HEK293 (cell line): ENCODE measurements at regions of chr19 and their contacts with region 1.

Region 1: GRCh38 chr19:10644260-10645007 is 9.7 kb upstream of the ILF3 start:
- H3K4me3 ChIP-seq: no peak overlapping the region
- H3K27ac ChIP-seq: no peak overlapping the region
- H3K4me1 ChIP-seq: no peaks in the 10 kb centered on the region
- CTCF ChIP-seq: peak; percentile 95

Region 2: DNA sequence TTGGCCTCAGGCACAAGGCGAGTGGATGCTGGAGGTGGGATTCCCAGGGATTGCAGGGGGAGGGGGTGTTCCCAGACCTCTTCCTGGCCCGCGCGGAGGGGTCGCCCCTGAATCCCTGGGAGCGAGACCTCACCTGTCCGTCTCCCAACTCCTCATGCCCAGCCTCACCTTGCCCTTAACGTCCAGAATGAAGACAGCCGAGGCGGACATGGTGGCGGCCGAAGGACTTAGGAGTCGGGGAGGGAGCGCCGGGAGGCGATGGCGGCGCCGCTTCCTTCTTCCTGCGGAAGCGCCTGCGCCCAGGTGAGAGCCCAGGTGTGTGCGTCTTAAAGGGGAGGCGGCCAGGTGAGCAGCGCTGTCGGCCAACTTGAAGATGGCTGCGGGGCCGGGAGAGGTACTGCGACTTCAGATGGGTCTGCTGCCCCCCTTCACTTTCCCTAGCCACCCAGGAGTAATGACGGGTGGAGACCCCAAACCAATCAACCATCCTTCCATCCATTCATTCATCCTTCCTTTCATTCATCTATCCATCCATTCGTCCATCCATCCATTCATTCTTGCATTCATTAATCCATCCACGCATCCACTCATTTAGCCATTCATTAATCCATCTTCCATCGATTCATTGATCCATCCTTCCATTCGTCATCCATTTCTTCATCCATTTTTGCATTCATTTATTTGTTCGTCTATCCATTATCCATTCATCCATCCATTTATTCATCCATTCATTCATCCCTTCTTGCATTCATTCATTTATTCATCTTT is 57.2 kb before region 1 on chr19 and contains the start of gene AP1M2:
- CTCF ChIA-PET with region 1: interaction called, 243 read pairs
- POLR2A ChIA-PET with region 1: interaction called, 3 read pairs
- H3K4me3 ChIP-seq: peak within 1 kb of the TSS; percentile 34
- H3K27ac ChIP-seq: no peak within 1 kb of the TSS
- H3K4me1 ChIP-seq: no peaks in the 10 kb centered on the region
- CTCF ChIP-seq: no peak

Region 3: DNA sequence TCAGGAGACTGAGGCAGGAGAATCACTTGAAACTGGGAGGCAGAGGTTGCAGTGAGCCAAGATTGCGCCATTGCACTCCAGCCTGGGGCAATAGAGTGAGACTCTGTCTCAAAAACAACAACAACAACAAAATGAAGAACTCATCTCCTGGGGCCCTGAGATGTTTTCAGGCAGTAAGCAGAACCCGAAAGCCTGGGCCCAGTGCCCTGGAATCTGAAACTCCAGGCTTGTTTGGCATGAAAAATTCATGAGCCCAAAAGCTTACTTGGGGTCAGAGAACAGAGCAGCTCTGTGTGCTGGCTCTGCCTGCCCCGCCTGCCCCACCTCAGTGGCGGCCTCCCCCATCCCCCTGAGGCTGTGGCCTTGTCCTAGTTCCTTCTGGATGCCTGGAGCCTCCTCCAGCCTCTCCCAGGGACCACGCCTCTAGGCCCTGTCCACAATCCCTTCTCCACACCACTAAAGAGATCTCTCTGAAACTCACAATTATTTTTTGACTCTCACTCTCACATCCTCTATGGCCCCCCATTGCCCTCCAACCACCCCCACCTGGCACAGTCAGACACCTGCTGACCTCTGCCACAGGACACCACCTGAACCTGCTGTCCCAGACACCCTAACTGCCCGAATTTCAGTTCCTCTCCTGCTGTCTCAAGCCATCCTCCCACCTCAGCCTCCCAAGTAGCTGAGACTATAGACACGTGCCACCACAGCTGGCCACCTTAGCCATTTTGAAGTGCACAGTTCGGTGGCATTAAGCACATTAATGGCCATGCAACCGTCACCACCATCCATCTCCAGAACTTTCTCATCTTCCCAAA is 50.4 kb before region 1 on chr19:
- CTCF ChIA-PET with region 1: interaction called, 14 read pairs
- POLR2A ChIA-PET with region 1: no interaction called
- H3K4me3 ChIP-seq: no peak overlapping the region
- H3K27ac ChIP-seq: no peak overlapping the region
- H3K4me1 ChIP-seq: no peaks in the 10 kb centered on the region
- CTCF ChIP-seq: no peak

Region 4: DNA sequence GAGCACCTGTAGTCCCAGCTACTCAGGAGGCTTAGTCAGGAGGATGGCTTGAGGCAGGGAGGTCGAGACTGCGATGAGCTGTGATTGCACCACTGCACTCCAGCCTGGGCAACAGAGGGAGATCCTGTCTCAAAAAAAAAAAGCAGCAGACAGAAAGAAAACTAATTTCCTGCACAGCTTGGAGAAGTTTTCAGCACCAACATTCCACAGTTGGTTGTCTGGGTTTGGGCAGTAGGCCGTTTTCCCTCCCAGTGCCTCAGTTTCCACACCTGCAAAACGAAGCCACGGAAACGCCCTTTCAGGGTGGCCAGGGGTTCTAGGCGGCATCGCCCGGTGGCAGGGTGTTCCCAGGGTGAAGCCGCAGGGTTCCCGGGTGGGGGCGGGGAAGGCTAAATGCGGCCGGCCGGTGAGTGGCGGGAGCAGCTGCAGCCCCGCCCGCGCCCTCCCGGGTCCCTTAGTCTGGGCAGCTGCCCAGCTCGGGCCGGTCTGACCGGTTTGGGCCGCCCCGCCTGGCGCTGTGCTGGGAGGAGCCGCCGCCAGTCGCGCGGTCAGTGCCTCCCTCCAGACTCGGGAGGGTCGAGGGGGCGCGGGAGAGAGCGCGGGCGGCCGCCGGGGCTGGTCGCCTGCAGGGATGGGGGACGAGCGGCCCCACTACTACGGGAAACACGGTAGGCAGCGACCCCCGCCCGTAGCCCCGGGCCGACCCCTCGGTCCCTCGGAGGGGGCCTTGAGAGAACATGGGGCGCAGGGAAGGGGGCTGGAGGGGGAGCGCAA is 19.2 kb before region 1 on chr19 and contains the start of gene SLC44A2:
- CTCF ChIA-PET with region 1: interaction called, 12 read pairs
- POLR2A ChIA-PET with region 1: interaction called, 6 read pairs
- H3K4me3 ChIP-seq: peak within 1 kb of the TSS; percentile 73
- H3K27ac ChIP-seq: peak within 1 kb of the TSS; percentile 24; the same call in 1 of the 2 replicates
- H3K4me1 ChIP-seq: no peaks in the 10 kb centered on the region; the same call in 1 of the 2 replicates
- CTCF ChIP-seq: peak; percentile 21; the same call in 1 of the 2 replicates